Mammary epithelial cell (primary cell): ENCODE measurements at regions of chr19 and their contacts with region 1.

Region 1: GRCh38 chr19:13150187-13150930 is at the starts of genes IER2 and STX10:
- DNase-seq: peak; percentile 93
- H3K4me3 ChIP-seq: peak within 1 kb of the TSS; percentile 61 to 93 (median 74)
- H3K27ac ChIP-seq: peak within 1 kb of the TSS; percentile 93
- H3K4me1 ChIP-seq: peaks cover 16% of the 10 kb centered on the region
- H3K27me3 ChIP-seq: no peaks in the 10 kb centered on the region
- CTCF ChIP-seq: peak; percentile 27 to 70
- total RNA-seq, gene IER2: 16.2 to 108 TPM
- total RNA-seq, gene STX10: 33.7 to 48.0 TPM

Region 2: DNA sequence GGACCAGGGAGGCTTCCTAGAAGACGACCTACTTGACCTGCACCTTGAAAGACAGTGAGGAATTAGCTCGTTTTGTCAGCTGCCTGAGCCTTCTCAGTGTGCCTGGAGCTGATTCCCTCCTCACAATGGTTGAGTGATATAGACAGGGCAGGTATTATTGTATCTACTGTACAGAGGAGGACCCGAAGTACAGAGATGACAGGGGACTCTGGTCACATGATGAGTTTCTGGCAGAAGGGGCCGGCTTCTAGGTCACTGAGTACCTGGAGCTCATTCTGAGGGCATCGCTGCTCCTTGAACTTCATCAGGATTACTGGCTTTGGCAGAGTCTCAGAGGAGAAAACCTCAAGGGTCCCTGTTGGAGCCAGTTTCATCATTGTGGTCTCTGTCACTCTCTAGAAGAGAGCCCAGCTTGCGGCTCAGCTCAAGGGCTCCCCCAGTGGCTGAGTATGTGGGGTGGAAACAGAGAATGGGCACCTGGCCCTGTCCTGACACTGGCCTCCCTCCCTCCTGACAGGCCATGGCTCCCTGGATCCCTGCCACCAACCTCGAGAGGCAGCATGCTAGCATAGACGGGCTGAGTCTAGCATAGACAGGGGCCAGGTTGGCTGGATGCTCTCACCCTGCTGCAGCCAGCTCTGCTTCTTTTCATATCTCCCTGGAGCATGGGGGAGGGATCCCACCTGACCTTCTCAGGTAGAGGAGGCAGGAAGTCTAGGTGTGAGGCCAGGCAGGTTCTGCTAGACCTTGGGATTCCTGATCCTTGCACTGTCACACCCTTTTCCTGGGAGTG is 116.3 kb before region 1 on chr19:
- CTCF ChIA-PET with region 1: no interaction called
- dilution Hi-C with region 1: no loop called
- in situ Hi-C with region 1: no loop called
- intact Hi-C with region 1: loop called (anchors 5 kb)
- DNase-seq: peak; percentile 68
- H3K4me3 ChIP-seq: peak overlapping the region in 1 of 3 experiments; percentile 8
- H3K27ac ChIP-seq: peak overlapping the region; percentile 97
- H3K4me1 ChIP-seq: peaks cover 93% of the 10 kb centered on the region
- H3K27me3 ChIP-seq: no peaks in the 10 kb centered on the region
- CTCF ChIP-seq: peak; percentile 92 to 94

Region 3: DNA sequence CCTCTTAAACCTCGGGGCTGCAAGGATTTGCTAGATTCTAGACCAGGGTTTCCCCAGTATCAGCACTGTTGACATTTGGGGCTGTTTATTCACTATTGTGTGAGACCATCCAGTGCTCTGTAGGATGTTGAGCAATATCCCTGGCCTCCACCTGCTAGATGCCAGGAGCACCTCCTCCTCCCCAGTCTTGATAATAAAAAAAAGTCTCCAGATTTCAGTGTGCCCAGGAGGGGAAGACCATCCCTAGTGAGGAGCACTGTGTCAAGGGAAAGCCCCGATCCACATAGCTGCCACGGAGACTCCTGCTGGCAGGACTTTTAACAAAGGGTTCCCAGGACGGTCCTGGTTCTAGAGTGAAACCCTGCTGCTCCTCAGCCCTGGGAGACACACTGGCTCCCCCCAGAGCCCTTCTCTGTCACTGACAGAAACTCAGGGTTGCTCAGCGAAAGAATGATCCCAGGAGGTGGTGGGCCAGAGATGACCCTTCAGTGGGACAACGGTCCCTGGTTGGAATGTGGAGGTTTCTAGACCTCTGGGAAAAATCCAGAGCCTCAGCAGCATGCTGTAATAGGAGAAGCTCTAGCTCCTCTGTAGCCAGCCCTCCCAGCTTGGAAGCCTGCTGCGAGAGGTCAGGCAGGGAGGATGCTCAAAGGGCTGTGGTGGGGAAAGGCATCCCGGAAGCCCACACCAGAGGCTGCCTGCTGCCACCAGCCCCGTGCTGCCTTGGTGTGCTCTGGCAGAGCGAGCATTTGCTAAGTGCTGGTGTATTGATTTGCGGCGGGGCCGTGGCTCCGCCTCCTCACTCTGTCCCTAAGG is 68.0 kb before region 1 on chr19:
- CTCF ChIA-PET with region 1: no interaction called
- dilution Hi-C with region 1: no loop called
- in situ Hi-C with region 1: no loop called
- intact Hi-C with region 1: no loop called
- DNase-seq: no peak
- H3K4me3 ChIP-seq: no peak overlapping the region
- H3K27ac ChIP-seq: no peak overlapping the region
- H3K4me1 ChIP-seq: no peaks in the 10 kb centered on the region
- H3K27me3 ChIP-seq: no peaks in the 10 kb centered on the region
- CTCF ChIP-seq: peak in 1 of 2 donors; percentile 2

Region 4: GRCh38 chr19:13117772-13118423 is 32.5 kb before region 1 on chr19 and contains the start of gene NACC1:
- CTCF ChIA-PET with region 1: no interaction called
- dilution Hi-C with region 1: no loop called
- in situ Hi-C with region 1: no loop called
- intact Hi-C with region 1: loop called (anchors 1 kb)
- DNase-seq: peak; percentile 85
- H3K4me3 ChIP-seq: peak within 1 kb of the TSS; percentile 90 to 100 (median 99)
- H3K27ac ChIP-seq: peak within 1 kb of the TSS; percentile 51
- H3K4me1 ChIP-seq: peaks cover 26% of the 10 kb centered on the region
- H3K27me3 ChIP-seq: no peaks in the 10 kb centered on the region
- CTCF ChIP-seq: no peak
- total RNA-seq, gene NACC1: 76.2 to 106 TPM

Region 5: DNA sequence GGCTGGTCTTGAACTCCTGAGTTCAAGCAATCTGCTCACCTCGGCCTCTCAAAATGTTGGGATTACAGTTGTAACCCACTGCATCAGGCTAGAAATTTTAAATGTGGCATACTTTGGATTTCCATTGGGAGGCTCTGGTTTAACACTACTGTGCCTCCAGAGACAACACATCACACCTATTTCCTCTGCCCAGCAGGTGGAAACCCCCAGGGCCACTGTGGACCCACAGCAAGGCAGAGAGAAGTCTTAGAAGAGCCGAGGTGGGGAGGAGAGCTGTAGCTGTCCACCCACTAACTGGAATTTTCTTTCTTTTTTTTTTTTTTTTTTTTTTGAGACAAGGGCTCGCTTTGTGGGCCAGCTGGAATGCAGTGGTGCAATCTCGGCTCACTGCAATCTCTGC is 39.2 kb after region 1 on chr19:
- CTCF ChIA-PET with region 1: no interaction called
- dilution Hi-C with region 1: loop called (anchors 5 kb)
- in situ Hi-C with region 1: no loop called
- intact Hi-C with region 1: loop called (anchors 1 kb)
- DNase-seq: no peak
- H3K4me3 ChIP-seq: no peak overlapping the region
- H3K27ac ChIP-seq: no peak overlapping the region
- H3K4me1 ChIP-seq: no peaks in the 10 kb centered on the region
- H3K27me3 ChIP-seq: no peaks in the 10 kb centered on the region
- CTCF ChIP-seq: no peak

Region 6: DNA sequence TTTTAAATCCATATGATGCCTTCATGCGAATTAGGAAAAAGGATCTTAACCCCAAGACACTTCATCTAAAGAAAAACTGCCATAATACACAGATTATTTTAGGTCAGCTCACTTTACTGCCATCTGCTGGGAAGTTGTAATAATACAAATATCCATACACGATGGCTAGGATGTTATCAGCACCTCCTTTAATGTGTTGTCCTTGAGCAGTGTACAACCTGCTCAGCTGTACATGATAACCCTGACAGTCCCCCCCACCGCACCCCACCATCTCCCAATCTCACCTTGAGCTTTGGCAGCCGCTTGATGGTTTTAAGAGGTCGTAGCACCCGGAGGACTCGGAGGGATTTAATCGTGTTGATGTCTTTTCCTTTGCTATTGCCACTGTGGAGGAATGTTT is 112.1 kb after region 1 on chr19:
- CTCF ChIA-PET with region 1: no interaction called
- dilution Hi-C with region 1: loop called (anchors 5 kb)
- in situ Hi-C with region 1: no loop called
- intact Hi-C with region 1: loop called (anchors 1 kb)
- DNase-seq: peak; percentile 48
- H3K4me3 ChIP-seq: no peak overlapping the region
- H3K27ac ChIP-seq: no peak overlapping the region
- H3K4me1 ChIP-seq: peaks cover 16% of the 10 kb centered on the region
- H3K27me3 ChIP-seq: peaks cover 2% of the 10 kb centered on the region
- CTCF ChIP-seq: peak; percentile 49 to 53

Region 7: GRCh38 chr19:14081325-14082093 is 931.1 kb after region 1 on chr19:
- CTCF ChIA-PET with region 1: no interaction called
- dilution Hi-C with region 1: no loop called
- in situ Hi-C with region 1: no loop called
- intact Hi-C with region 1: loop called (anchors 5 kb)
- DNase-seq: peak; percentile 98
- H3K4me3 ChIP-seq: peak overlapping the region; percentile 68 to 95 (median 72)
- H3K27ac ChIP-seq: peak overlapping the region; percentile 79
- H3K4me1 ChIP-seq: peaks cover 9% of the 10 kb centered on the region
- H3K27me3 ChIP-seq: no peaks in the 10 kb centered on the region
- CTCF ChIP-seq: no peak